Esophagus squamous epithelium (tissue), 5 donors: ENCODE measurements at regions of chr1 and their contacts with region 1.

Region 1: GRCh38 chr1:111399792-111400610 is 27.5 kb downstream of the OVGP1 start:
- DNase-seq: no peak
- H3K4me3 ChIP-seq: no peak overlapping the region
- H3K27ac ChIP-seq: no peak overlapping the region
- H3K4me1 ChIP-seq: no peaks in the 10 kb centered on the region
- H3K27me3 ChIP-seq: peaks cover 0 to 38% (median 0%) of the 10 kb centered on the region in 4 donors
- CTCF ChIP-seq: peak; percentile 55 to 73 (median 66)
- POLR2A ChIP-seq: no peak

Region 2: DNA sequence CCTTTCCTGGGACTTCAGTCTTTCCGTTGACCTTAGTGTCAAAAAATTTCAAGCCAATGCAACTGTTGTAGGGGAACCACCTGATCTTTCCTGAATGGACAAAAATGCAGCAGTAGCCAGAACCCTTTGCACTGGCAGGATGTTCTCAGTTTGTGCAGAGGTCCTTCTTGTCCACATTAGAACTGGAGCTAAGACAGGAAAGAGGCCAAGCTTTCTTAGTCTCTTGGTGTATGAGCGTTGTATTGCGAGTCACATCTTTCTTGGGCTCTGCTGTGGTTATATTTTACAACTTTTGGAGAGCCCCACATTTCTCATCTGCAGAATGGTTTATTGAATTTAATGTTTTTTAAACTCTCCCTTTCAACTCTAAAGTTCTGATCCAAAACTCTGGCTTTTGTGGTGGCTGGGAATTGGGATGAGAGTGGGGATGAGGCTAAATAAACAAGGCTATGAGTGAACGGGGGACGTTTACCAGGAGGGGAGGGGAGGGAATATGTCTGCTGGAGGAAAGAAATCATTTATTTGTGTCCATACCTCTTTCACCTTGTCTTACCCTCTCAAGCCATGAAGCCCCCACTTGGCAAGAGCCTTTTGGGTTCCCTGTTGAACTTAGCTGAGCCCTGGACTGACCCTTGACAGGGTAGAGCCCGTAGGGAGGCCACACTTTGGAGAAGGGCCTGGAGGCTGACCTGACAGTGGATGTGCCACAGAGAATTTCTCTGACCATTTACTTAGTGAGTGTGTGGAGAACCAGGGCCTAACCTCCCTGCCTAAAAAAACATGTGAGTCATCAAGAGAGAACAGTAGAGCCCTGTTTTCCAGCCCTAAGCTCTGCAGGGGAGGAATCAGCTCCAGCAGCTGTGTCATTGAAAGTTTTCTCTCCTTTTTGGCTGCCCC is 171.9 kb before region 1 on chr1:
- intact Hi-C with region 1: loop called (anchors 5 kb)
- DNase-seq: no peak
- H3K4me3 ChIP-seq: no peak overlapping the region
- H3K27ac ChIP-seq: peak overlapping the region in 3 of 4 donors; percentile 12 to 68 (median 57)
- H3K4me1 ChIP-seq: peaks cover 0 to 26% (median 20%) of the 10 kb centered on the region in 3 donors
- H3K27me3 ChIP-seq: no peaks in the 10 kb centered on the region
- CTCF ChIP-seq: no peak
- POLR2A ChIP-seq: no peak

Region 3: DNA sequence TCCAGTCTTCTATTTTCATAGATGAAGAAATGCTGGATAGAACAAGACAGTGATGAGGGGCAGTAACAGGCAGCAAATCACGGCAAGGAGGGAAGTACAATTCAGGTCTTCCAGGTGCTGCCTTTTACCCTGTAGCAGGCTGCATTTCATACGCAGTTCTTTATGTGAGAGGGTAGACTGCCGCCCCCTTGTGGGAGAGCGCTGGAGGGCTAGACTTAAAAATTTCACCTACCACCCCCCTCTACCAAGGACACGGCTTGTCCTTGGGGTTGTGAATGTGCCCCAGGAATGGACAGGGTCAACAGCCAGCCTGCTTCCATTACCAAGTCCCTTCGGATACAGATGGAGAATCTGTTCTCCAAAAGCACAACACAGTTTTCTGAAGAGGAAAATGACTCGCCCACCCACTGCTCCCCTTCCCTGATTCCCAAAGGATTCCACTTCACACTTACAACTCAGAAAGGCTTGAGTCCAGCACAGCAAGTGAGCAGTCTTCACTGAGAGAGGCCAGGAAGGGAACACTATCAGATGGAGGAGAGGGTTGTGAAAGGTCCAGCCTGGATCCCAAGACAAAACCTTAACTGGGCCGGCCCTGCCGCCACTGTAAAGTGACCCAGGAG is 41.7 kb after region 1 on chr1:
- intact Hi-C with region 1: no loop called
- DNase-seq: no peak
- H3K4me3 ChIP-seq: no peak overlapping the region
- H3K27ac ChIP-seq: no peak overlapping the region
- H3K4me1 ChIP-seq: peaks cover 0 to 12% (median 0%) of the 10 kb centered on the region in 3 donors
- H3K27me3 ChIP-seq: no peaks in the 10 kb centered on the region
- CTCF ChIP-seq: peak in 5 of 6 experiments; percentile 13 to 24 (median 18)
- POLR2A ChIP-seq: no peak

Region 4: DNA sequence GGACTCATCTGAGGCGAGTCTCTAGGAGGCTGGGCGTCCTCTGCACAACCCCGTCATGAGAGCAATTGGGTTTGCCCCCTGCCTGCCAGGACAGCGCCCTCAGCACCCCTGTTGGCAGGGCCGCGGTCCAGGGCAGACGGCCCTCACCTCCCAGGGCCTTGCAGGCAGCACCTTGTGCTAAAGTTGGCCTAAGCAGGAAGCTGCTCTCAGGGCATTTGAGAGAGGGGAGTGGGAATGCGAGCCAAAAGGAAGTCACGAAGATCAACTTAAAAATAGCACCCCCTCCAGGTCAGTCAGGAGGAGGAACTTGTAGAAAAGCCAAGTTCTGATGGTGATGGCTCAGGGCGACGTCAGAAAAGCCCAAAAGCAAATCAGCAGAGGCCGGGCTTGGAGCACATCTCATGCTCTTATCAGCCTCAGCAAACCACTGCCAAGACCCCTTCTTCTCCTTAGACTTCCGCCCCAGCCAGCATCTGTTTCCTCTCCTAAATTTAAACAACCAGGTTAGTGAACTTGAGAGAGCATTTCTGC is 116.1 kb after region 1 on chr1:
- intact Hi-C with region 1: no loop called
- DNase-seq: no peak
- H3K4me3 ChIP-seq: peak overlapping the region; percentile 5 to 62 (median 37)
- H3K27ac ChIP-seq: peak overlapping the region; percentile 56 to 85 (median 80)
- H3K4me1 ChIP-seq: peaks cover 14 to 41% (median 19%) of the 10 kb centered on the region in 3 donors
- H3K27me3 ChIP-seq: peaks cover 0 to 9% (median 0%) of the 10 kb centered on the region in 4 donors
- CTCF ChIP-seq: peak in 3 of 6 experiments; percentile 19 to 34 (median 25)
- POLR2A ChIP-seq: peak in 1 of 4 donors; percentile 16

Region 5: DNA sequence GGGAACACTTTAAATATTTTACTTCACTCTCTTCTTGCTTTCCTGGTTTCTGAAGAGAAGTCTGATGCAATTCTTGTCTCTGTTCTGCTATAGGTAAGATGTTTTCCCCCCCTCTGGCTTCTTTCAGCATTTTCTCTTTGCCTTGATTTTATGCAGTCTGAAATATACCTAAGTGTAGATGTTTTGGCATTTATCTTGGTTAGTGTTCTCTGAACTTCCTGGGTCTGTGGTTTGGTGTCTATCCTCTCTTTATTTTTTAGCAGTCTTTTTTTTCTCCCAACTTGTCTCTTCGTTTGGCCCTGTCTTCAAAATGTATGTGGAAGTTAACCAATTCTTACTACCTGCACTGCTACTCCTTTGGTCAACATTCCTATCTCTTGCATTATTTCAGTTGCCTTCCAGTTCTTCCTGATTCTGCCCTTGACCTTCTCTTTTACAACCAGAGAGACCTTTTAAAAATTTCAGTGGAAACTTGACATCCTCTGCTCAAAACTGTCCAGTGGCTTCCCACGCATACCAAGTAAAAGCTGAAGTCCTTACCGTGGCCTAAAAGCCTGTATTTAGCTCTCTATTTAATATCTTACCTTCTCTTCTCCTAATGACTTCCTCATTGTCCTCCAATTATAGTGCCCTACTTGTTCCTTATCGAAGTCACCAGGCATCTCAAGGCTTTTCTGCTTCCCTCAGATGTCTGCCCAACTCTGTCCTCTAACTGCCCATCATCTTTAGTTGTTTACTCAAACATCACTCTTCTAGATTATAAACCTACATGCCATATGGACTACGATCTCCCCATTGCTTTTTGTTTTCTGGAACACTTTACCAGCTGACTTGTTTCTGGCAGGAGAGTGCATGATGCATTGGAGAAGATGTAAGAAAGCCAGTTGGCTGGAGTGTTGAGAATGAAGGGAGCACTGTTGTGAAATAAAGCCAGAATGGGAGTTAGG is 260.5 kb after region 1 on chr1:
- intact Hi-C with region 1: no loop called
- DNase-seq: no peak
- H3K4me3 ChIP-seq: no peak overlapping the region
- H3K27ac ChIP-seq: peak overlapping the region in 3 of 4 donors; percentile 24 to 51 (median 41)
- H3K4me1 ChIP-seq: peaks cover 0 to 72% (median 12%) of the 10 kb centered on the region in 3 donors
- H3K27me3 ChIP-seq: no peaks in the 10 kb centered on the region
- CTCF ChIP-seq: no peak
- POLR2A ChIP-seq: no peak